Left ventricle myocardium inferior (tissue), 1 donor: ENCODE measurements at regions of chr6 and their contacts with region 1.

Region 1: DNA sequence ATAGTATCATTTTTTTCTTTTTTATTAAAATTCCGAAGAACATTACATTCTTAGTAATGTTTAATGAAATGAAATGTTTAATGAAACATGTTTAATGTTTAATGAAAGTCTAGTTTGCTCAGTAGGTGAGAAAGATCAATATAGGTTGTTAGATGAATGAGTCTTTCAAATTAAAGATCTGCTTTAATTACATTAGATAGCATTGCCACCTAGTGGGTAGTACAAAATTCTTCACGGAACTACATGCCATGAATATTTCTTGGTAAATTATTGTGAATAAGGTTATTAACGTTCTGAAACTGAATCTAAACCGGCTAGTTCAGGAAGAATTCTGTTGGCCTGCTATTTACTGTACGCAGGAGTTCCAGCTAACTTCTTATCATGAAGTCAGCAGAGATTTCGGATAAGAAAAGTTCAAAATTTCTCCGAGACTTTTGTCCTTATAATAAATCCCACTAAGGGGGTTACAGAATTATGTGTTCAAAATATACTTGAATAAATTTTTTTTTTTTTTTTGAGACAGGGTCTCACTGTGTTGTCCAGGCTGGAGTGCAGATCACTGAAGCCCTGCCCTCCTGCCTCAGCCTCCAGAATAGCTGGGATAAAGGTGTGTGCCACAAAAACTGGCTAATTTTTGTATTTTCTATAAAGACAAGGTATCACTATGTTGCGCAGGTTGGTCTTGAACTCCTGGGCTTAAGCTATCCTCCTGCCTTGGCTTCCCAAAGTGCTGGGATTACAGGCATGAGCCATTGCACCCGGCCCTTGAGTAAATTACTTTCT is 7.9 kb upstream of the GMNN start:
- DNase-seq: no peak
- H3K4me3 ChIP-seq: no peak overlapping the region
- H3K27ac ChIP-seq: no peak overlapping the region
- H3K4me1 ChIP-seq: no peaks in the 10 kb centered on the region
- H3K27me3 ChIP-seq: no peaks in the 10 kb centered on the region
- CTCF ChIP-seq: peak; percentile 55

Region 2: DNA sequence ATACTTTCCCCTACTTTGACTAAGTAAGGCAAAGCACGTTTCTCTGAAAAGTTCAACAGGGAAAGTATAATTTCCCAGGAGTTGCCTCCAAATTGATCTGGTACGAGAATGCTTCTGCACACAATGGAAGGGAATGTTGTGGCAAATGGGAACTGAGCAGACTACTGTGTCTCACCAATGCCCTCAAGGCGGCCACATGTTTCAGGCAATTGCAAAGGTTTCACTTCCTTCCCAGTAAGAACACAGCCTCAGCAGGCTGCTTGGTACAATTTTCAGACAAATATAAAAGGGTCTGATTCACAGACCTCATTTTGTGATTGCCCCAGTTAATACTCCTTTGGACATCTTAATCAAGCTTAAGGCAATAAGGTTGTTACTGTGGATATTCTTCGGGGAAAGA is 192.1 kb before region 1 on chr6:
- intact Hi-C with region 1: loop called (anchors 5 kb)
- DNase-seq: no peak
- H3K4me3 ChIP-seq: no peak overlapping the region
- H3K27ac ChIP-seq: no peak overlapping the region
- H3K4me1 ChIP-seq: no peaks in the 10 kb centered on the region
- H3K27me3 ChIP-seq: peaks cover 27% of the 10 kb centered on the region
- CTCF ChIP-seq: no peak

Region 3: DNA sequence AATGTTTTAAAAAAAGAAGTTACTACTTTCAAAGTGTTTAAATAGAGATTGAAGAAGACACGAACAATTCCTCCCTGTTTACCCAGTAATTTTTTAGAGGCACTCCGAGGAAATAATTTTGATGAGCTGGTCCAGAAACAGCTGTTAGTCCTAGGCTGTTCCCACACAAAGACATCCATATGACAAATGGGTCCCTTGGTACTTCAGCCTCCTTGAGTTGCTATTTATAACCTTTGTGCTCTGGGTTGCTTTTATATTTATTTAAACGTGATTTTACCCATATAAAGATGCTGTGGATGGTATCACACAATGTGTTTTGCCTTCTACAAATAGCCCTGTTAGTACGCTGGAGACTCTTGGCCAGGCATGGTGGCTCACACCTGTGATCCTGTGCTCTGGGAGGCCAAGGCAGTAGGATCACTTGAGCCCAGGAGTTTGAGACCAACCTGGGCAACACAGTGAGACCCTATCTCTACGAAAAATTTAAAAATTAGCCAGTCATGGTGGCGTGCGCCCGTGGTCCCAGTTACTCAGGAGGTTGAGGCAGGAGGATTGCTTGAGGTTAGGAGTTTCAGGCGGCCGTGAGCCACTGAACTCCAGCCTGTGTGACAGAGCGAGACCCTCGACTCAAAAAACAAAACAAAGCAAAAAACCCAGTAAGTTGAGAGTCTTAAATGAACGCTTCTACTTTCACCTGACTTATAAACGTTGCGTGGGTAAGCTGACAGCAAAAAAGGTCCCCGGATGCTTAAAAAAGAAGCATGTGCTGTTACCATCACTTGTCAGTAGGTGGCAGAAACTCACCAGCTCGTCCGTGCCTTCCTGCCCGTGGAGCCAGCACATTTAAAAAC is 88.7 kb after region 1 on chr6:
- intact Hi-C with region 1: no loop called
- DNase-seq: peak; percentile 19
- H3K4me3 ChIP-seq: no peak overlapping the region
- H3K27ac ChIP-seq: peak overlapping the region; percentile 45
- H3K4me1 ChIP-seq: peaks cover 22% of the 10 kb centered on the region
- H3K27me3 ChIP-seq: no peaks in the 10 kb centered on the region
- CTCF ChIP-seq: peak; percentile 91